OCI-LY7 (cell line): ENCODE measurements at regions of chr12 and their contacts with region 1.

Region 1: GRCh38 chr12:108803428-108804105 is 53.8 kb downstream of the SSH1 start:
- DNase-seq: peak; percentile 84
- H3K4me3 ChIP-seq: no peak overlapping the region
- H3K27ac ChIP-seq: no peak overlapping the region
- H3K4me1 ChIP-seq: peaks cover 25% of the 10 kb centered on the region
- CTCF ChIP-seq: peak; percentile 99

Region 2: GRCh38 chr12:108477055-108477880 is 326.3 kb before region 1 on chr12:
- CTCF ChIA-PET with region 1: no interaction called
- POLR2A ChIA-PET with region 1: no interaction called
- intact Hi-C with region 1: no loop called
- DNase-seq: no peak
- H3K4me3 ChIP-seq: no peak overlapping the region
- H3K27ac ChIP-seq: no peak overlapping the region
- H3K4me1 ChIP-seq: no peaks in the 10 kb centered on the region
- CTCF ChIP-seq: no peak

Region 3: GRCh38 chr12:108570743-108571608 is 232.6 kb before region 1 on chr12:
- CTCF ChIA-PET with region 1: no interaction called
- POLR2A ChIA-PET with region 1: interaction called, 7 read pairs
- intact Hi-C with region 1: loop called (anchors 1 kb)
- DNase-seq: peak; percentile 75
- H3K4me3 ChIP-seq: no peak overlapping the region
- H3K27ac ChIP-seq: peak overlapping the region; percentile 93
- H3K4me1 ChIP-seq: peaks cover 83% of the 10 kb centered on the region
- CTCF ChIP-seq: peak; percentile 76

Region 4: DNA sequence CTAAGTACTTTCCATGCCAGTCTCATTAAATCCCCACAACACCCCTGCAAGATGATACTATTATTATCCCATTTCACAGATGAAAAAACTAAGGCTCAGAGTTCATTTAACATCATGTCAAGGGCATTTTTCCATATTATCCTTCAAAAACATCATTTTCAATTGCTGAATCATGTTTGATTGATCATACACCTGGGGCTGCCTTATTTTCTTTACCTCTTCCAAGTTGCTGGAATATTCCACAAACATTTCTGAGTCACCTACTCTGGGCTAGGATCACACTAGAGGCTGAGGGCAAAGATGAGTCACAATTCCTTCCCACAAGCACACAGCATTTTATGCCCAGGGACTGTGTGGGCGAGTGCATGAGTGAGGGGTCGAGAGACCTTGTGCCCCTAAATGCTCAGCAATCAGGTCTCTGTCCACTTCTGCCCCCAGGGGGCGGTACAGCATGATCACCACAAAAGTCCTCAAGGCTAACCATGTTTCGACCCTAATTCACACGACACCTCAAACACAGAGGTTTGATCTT is 191.6 kb before region 1 on chr12:
- CTCF ChIA-PET with region 1: no interaction called
- POLR2A ChIA-PET with region 1: interaction called, 5 read pairs
- intact Hi-C with region 1: loop called (anchors 1 kb)
- DNase-seq: peak; percentile 73
- H3K4me3 ChIP-seq: no peak overlapping the region
- H3K27ac ChIP-seq: no peak overlapping the region
- H3K4me1 ChIP-seq: peaks cover 11% of the 10 kb centered on the region
- CTCF ChIP-seq: peak; percentile 82

Region 5: GRCh38 chr12:108731105-108731865 is 72.3 kb before region 1 on chr12 and contains the start of gene CORO1C:
- CTCF ChIA-PET with region 1: interaction called, 3 read pairs
- POLR2A ChIA-PET with region 1: interaction called, 3 read pairs
- intact Hi-C with region 1: loop called (anchors 2 kb)
- DNase-seq: peak; percentile 96
- H3K4me3 ChIP-seq: peak within 1 kb of the TSS; percentile 90
- H3K27ac ChIP-seq: peak within 1 kb of the TSS; percentile 74
- H3K4me1 ChIP-seq: peaks cover 41% of the 10 kb centered on the region
- CTCF ChIP-seq: peak; percentile 85
- total RNA-seq, gene CORO1C: 74.7 and 76.3 TPM in 2 replicates

Region 6: DNA sequence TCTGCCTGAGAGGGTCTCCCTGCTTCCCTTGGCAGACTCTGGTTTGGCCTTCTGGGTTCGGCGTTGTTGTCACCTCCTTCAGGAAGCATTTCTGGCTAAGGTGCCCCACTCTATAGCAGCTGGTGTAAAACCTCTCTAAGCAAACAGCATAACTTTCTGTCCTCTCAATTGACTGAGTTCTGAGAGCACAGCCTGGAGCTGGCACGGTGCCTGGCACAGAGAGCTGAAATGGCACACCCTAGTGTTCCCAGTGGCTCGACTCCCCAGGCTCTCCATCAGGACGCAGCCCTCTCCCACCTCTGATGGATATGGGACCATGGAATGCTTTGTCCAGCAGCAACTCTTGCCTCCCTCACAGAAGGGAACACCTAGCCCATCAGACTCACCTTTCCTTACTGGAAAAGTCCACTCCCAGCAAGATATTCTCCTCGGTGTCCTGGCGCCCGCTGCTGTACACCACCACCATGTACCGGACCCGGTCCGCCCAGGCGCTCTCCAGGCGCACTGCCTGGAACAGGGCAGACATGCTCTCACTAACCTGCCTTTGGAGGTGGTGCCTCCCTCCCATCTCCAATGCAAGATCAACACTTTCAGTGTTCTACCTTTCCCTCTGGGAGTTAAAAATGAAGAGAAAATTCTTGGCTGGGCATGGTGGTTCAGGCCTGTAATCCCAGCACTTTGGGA is 13.2 kb after region 1 on chr12:
- CTCF ChIA-PET with region 1: no interaction called
- POLR2A ChIA-PET with region 1: interaction called, 15 read pairs
- intact Hi-C with region 1: no loop called
- DNase-seq: no peak
- H3K4me3 ChIP-seq: no peak overlapping the region
- H3K27ac ChIP-seq: no peak overlapping the region
- H3K4me1 ChIP-seq: peaks cover 6% of the 10 kb centered on the region
- CTCF ChIP-seq: no peak

Region 7: DNA sequence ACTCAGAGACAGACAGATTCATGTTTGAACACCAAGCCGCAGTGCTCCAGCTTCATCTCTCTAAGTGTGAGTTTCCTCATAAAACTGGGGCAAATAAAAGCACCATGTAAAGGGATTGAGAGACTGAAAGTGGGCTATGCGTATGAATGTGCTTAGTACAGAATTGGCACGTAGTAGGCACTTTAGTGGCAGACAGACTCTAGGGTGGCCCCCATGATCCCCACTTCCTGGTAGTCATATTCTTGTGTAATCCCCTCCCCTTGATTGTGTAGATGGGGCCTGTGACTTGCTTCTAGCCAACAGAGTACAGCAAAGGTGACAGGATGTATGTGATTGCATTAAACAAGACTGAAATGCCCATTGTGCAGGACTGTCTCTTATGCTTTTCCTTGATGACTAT is 119.4 kb after region 1 on chr12:
- CTCF ChIA-PET with region 1: no interaction called
- POLR2A ChIA-PET with region 1: no interaction called
- intact Hi-C with region 1: no loop called
- DNase-seq: no peak
- H3K4me3 ChIP-seq: no peak overlapping the region
- H3K27ac ChIP-seq: no peak overlapping the region
- H3K4me1 ChIP-seq: peaks cover 6% of the 10 kb centered on the region
- CTCF ChIP-seq: no peak

Region 8: DNA sequence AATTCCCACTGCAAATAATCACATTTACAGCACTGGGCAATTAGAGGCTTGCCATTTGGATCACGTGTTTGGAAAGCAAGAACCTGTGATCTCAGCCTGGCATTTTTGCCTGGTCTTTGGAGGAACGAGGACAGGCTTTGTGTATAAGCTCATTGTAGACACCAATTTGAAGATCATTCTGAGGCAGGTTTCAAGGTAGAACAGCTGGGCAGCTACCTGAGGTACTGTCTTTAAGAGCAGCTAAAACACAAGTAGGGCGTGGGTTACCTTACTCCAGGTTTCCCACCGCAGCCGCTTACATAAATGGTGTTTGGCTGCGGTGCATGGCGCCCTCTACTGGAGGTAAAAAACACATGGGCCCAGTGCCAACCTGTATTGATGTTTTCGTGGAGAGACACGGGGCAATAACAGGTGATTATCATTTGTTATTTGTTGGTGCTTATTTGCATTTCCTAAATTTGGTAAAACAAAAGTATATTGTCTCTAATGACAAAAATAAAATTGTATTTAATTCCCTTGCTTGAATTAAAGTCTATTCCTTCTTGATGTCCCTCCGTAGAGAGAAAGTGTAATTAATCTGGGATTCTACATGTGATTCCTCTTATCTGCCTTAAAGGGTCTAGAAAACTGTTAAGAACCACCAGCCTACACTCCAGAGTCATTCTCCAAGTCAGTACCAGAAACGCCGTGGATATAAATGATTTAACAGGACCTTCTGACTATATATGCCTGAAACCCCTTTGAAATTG is 147.6 kb after region 1 on chr12:
- CTCF ChIA-PET with region 1: interaction called, 3 read pairs
- POLR2A ChIA-PET with region 1: no interaction called
- intact Hi-C with region 1: loop called (anchors 1 kb)
- DNase-seq: peak; percentile 83
- H3K4me3 ChIP-seq: no peak overlapping the region
- H3K27ac ChIP-seq: no peak overlapping the region
- H3K4me1 ChIP-seq: peaks cover 20% of the 10 kb centered on the region
- CTCF ChIP-seq: peak; percentile 99